A549 (cell line): ENCODE measurements at regions of chr7 and their contacts with region 1.

Region 1: DNA sequence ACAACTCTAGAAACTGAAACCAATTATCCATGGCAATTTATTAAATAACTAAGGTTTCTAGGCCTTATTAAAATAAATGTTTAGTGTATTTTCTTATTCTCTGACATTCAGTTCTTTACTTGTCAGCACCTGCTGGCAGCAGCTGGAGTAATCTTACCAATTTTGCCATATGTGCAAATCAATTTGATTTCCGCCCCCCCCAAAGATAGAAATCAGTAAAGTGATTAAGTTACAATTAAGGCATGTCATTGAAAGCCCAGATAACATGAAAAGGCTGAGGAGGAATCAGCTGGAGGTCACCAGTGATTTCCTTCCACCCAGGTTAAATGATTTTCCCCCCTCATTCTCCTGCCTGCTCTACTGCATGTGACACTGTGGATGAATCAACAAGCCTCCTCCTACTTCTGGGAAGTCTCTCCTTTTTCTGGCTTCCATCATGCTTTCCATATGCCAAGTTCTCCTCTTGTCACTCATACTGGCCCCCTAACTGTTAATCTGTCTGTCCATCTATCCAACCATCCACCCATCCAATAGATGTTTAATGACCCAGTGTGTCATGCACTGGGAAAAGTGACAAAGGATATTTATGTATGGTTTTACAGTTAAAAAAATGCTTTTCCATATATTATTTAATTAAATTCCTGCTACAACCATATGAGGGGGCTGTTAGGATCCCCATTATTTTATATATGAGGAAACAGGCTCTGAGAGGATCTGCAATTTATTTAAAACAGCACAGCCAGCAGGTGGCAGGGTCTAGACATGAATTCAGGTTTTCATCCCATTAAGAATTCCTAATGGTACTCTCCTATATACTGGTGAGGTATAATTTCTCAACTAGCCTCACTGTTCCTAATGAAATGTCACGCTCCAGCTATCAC is 116.5 kb downstream of the ATXN7L1 start:
- DNase-seq: peak; percentile 66 to 71
- ATAC-seq: peak; percentile 91 to 93
- H3K4me3 ChIP-seq: no peak overlapping the region
- H3K27ac ChIP-seq: no peak overlapping the region
- H3K4me1 ChIP-seq: no peaks in the 10 kb centered on the region
- CTCF ChIP-seq: peak; percentile 94
- EP300 ChIP-seq: no peak
- POLR2A ChIP-seq: no peak
- RAD21 ChIP-seq: peak; percentile 93 to 94

Region 2: GRCh38 chr7:105743351-105744090 is 16.4 kb before region 1 on chr7:
- CTCF ChIA-PET with region 1: interaction called, 37 read pairs
- POLR2A ChIA-PET with region 1: no interaction called
- DNase-seq: no peak
- ATAC-seq: no peak
- H3K4me3 ChIP-seq: no peak overlapping the region
- H3K27ac ChIP-seq: no peak overlapping the region
- H3K4me1 ChIP-seq: peaks cover 5% of the 10 kb centered on the region; the same call in 1 of the 3 replicates
- CTCF ChIP-seq: no peak
- EP300 ChIP-seq: no peak
- POLR2A ChIP-seq: no peak
- RAD21 ChIP-seq: no peak

Region 3: DNA sequence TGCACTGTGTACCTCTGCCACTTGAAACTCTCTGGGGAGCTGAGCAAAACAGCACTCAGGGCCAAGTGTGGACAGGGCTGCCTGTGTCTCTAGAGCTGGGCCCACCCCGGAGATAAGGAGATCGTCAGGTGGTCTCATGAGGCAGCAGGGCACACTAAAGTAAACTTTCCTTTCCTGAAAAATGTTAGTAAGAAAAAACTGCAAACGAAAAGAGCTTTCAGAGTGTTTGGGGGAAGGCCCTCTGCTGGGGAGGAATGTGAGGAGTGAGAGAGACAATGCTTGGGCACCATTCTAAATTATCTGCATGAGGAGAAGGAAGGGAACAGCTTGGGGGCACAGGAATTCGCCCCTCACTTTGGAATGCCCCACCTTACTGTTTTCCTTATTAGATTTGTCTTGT is 11.2 kb before region 1 on chr7:
- CTCF ChIA-PET with region 1: interaction called, 37 read pairs
- POLR2A ChIA-PET with region 1: no interaction called
- DNase-seq: no peak
- ATAC-seq: no peak
- H3K4me3 ChIP-seq: no peak overlapping the region
- H3K27ac ChIP-seq: no peak overlapping the region
- H3K4me1 ChIP-seq: no peaks in the 10 kb centered on the region
- CTCF ChIP-seq: no peak
- EP300 ChIP-seq: no peak
- POLR2A ChIP-seq: no peak
- RAD21 ChIP-seq: no peak

Region 4: GRCh38 chr7:105876091-105876963 is 116.4 kb after region 1 on chr7 and contains the start of gene ATXN7L1:
- CTCF ChIA-PET with region 1: interaction called, 34 read pairs
- POLR2A ChIA-PET with region 1: no interaction called
- DNase-seq: peak; percentile 87 to 96
- ATAC-seq: peak; percentile 86 to 90
- H3K4me3 ChIP-seq: peak within 1 kb of the TSS; percentile 84
- H3K27ac ChIP-seq: peak within 1 kb of the TSS; percentile 95 to 96
- H3K4me1 ChIP-seq: peaks cover 24% of the 10 kb centered on the region
- CTCF ChIP-seq: peak; percentile 91
- EP300 ChIP-seq: no peak
- POLR2A ChIP-seq: peak; percentile 86
- RAD21 ChIP-seq: no peak; a peak in 2 of 5 replicates
- polyA plus RNA-seq, gene ATXN7L1: 4.5 and 4.8 TPM in 2 replicates

Region 5: DNA sequence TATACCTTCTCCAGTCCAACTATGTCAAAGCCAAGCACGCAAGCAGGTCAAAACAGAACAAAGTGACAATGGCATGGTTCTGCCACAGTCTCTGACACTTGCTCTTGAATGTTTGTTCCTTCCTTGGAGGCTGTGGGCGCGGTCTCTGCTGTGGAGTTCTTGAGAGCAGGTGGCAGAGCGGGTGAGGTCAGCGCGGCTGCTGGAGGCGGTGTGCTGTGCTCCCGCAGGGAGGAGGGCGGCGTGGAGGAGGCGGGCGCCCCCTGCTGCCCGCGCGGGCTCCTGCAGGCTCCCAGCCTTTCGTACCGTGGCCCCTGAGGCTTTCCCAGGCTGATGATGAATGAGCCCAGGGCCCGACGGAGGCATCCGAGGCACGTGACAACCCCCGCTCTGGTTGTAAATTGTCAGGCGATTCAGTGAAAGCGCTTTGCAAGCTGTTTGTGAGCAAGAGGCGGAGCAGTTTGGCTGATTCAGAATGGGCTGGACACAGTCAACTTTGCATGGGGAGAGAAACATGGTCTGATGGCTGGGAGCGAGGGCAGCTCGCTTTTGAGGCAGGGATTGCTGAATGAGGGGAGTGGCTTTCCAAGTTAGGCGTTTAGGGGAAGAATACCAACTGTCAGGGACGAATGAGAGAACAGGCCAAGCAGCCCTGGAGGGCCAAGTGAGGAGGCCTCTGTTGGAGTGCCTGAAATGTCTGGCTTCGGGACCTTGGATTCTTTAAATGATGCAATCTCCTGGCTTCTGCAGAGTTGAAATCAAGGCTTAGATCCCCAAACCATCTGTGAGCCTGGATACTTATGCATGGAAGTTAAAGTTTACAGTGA is 249.7 kb after region 1 on chr7:
- CTCF ChIA-PET with region 1: interaction called, 71 read pairs
- POLR2A ChIA-PET with region 1: no interaction called
- DNase-seq: peak; percentile 76 to 85
- ATAC-seq: peak; percentile 97 to 99
- H3K4me3 ChIP-seq: no peak overlapping the region
- H3K27ac ChIP-seq: no peak overlapping the region
- H3K4me1 ChIP-seq: peaks cover 4% of the 10 kb centered on the region; the same call in 2 of the 3 replicates
- CTCF ChIP-seq: peak; percentile 96
- EP300 ChIP-seq: no peak
- POLR2A ChIP-seq: no peak
- RAD21 ChIP-seq: peak; percentile 80 to 92

Region 6: GRCh38 chr7:106022193-106022821 is 262.4 kb after region 1 on chr7:
- CTCF ChIA-PET with region 1: interaction called, 14 read pairs
- POLR2A ChIA-PET with region 1: no interaction called
- DNase-seq: no peak
- ATAC-seq: no peak
- H3K4me3 ChIP-seq: no peak overlapping the region
- H3K27ac ChIP-seq: no peak overlapping the region
- H3K4me1 ChIP-seq: no peaks in the 10 kb centered on the region
- CTCF ChIP-seq: no peak
- EP300 ChIP-seq: no peak
- POLR2A ChIP-seq: no peak
- RAD21 ChIP-seq: no peak

Region 7: GRCh38 chr7:106112117-106112971 is 352.4 kb after region 1 on chr7 and contains the start of gene SYPL1:
- CTCF ChIA-PET with region 1: no interaction called
- POLR2A ChIA-PET with region 1: no interaction called
- DNase-seq: peak; percentile 84 to 96
- ATAC-seq: peak; percentile 96
- H3K4me3 ChIP-seq: peak within 1 kb of the TSS; percentile 92
- H3K27ac ChIP-seq: peak within 1 kb of the TSS; percentile 99
- H3K4me1 ChIP-seq: peaks cover 28% of the 10 kb centered on the region
- CTCF ChIP-seq: no peak
- EP300 ChIP-seq: no peak
- POLR2A ChIP-seq: peak; percentile 74
- RAD21 ChIP-seq: no peak
- polyA plus RNA-seq, gene SYPL1: 126 and 131 TPM in 2 replicates